HAP-1 (cell line): ENCODE measurements at regions of chr18 and their contacts with region 1.

Region 1: DNA sequence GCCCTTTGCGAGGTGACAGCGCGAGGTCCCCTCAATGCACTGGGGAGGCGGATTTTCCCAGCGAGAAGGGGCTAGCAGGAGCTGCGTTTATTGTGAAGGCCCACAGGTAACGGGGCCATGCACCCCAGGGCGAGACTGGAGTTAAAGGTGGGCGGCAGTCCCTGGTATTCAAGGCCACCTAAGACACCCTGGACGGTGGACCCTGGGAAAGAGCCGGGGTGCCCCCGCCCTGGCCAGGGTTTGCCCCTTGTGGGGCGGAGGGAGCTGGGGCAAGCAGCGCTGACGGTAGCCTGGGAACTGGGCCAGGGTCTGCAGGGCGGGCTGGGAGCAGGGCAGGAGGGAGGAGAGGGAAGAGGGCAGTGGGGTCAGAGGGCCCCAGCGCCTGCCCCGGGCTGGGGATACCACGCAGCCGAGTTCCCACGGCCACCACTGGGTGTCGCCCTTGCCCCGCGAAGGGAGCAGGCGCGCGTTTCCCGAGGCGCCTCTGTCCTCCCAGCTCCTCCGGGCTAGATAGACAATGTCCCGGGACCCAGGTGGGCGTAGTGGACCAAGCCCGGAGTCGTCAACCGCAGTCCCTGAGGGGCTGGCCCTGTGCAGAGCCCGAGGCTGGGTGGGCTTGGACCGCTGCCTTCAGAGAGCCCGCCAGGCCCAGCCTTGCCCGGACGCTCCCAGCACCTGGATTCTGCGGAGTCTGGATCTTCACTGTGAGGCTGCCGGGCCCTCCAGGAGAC is 80.2 kb downstream of the SMAD4 start:
- DNase-seq: peak; percentile 32 to 86
- H3K4me3 ChIP-seq: no peak overlapping the region
- H3K4me1 ChIP-seq: no peaks in the 10 kb centered on the region
- H3K27me3 ChIP-seq: no peaks in the 10 kb centered on the region

Region 2: GRCh38 chr18:50797142-50797541 is 313.1 kb before region 1 on chr18:
- in situ Hi-C with region 1: no loop called
- DNase-seq: no peak
- H3K4me3 ChIP-seq: no peak overlapping the region
- H3K4me1 ChIP-seq: no peaks in the 10 kb centered on the region
- H3K27me3 ChIP-seq: peaks cover 2% of the 10 kb centered on the region; the same call in 1 of the 2 replicates

Region 3: GRCh38 chr18:51390702-51391101 is 280.5 kb after region 1 on chr18:
- in situ Hi-C with region 1: loop called (anchors 25 kb)
- DNase-seq: no peak
- H3K4me3 ChIP-seq: no peak overlapping the region
- H3K4me1 ChIP-seq: no peaks in the 10 kb centered on the region
- H3K27me3 ChIP-seq: no peaks in the 10 kb centered on the region

Region 4: GRCh38 chr18:51498085-51498855 is 388.0 kb after region 1 on chr18:
- in situ Hi-C with region 1: no loop called
- DNase-seq: no peak
- H3K4me3 ChIP-seq: no peak overlapping the region
- H3K4me1 ChIP-seq: no peaks in the 10 kb centered on the region
- H3K27me3 ChIP-seq: no peaks in the 10 kb centered on the region

Region 5: GRCh38 chr18:51559882-51560247 is 449.6 kb after region 1 on chr18:
- in situ Hi-C with region 1: loop called (anchors 25 kb)
- DNase-seq: no peak
- H3K4me3 ChIP-seq: no peak overlapping the region
- H3K4me1 ChIP-seq: no peaks in the 10 kb centered on the region
- H3K27me3 ChIP-seq: no peaks in the 10 kb centered on the region

Region 6: DNA sequence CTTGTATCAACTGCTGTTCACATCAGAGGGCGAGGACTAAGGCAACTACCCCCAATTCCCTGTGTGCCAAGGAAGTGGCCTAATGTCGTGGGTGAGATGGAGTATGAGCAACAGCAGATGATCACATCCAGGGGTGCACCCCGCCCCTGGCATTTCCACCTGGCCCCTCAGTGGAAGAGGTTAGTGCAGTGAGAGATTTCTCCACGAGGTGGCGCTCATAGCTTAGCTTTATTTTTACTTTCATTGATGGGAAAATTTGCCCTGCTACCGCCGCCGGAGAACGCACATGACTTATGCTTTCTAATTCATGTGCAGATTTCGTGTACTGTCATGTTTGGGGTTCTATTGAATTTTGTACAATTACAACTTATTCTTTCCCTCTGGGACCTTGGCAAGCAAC is 557.9 kb after region 1 on chr18:
- in situ Hi-C with region 1: loop called (anchors 25 kb)
- DNase-seq: peak; percentile 63 to 82
- H3K4me3 ChIP-seq: no peak overlapping the region
- H3K4me1 ChIP-seq: no peaks in the 10 kb centered on the region
- H3K27me3 ChIP-seq: no peaks in the 10 kb centered on the region

Region 7: DNA sequence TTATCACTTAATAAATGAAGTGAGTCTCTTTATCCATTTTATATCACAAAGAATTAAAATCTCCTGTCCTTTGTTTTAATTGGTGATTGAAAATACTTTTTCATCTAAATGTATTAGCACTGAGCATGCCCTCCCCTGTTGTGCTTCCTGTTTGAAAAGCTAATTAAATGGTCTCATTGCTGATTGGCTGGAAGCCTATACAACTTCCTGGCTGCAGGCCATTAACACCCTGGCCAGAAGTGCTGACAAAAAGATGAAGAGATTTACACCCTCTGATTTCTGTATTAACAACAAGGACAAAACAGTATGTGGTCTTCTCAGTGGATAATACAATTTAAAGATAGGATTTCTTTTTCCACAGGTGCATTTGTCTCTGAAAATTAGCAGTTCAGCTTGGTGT is 1777.8 kb after region 1 on chr18:
- in situ Hi-C with region 1: loop called (anchors 25 kb)
- DNase-seq: no peak
- H3K4me3 ChIP-seq: no peak overlapping the region
- H3K4me1 ChIP-seq: no peaks in the 10 kb centered on the region
- H3K27me3 ChIP-seq: no peaks in the 10 kb centered on the region